ENCODE measurements at regions of chr9 and their contacts with region 1.

Region 1: GRCh38 chr9:101530077-101530711 is 3.5 kb upstream of the RNF20 start:
- DNase-seq: peak; percentile 51 to 76 (median 64)
- H3K4me3 ChIP-seq: no peak overlapping the region
- H3K27ac ChIP-seq: no peak overlapping the region
- H3K4me1 ChIP-seq: no peaks in the 10 kb centered on the region
- H3K27me3 ChIP-seq: no peaks in the 10 kb centered on the region
- CTCF ChIP-seq: peak; percentile 62 to 79 (median 67)
- EP300 ChIP-seq: no peak
- POLR2A ChIP-seq: no peak

Region 2: DNA sequence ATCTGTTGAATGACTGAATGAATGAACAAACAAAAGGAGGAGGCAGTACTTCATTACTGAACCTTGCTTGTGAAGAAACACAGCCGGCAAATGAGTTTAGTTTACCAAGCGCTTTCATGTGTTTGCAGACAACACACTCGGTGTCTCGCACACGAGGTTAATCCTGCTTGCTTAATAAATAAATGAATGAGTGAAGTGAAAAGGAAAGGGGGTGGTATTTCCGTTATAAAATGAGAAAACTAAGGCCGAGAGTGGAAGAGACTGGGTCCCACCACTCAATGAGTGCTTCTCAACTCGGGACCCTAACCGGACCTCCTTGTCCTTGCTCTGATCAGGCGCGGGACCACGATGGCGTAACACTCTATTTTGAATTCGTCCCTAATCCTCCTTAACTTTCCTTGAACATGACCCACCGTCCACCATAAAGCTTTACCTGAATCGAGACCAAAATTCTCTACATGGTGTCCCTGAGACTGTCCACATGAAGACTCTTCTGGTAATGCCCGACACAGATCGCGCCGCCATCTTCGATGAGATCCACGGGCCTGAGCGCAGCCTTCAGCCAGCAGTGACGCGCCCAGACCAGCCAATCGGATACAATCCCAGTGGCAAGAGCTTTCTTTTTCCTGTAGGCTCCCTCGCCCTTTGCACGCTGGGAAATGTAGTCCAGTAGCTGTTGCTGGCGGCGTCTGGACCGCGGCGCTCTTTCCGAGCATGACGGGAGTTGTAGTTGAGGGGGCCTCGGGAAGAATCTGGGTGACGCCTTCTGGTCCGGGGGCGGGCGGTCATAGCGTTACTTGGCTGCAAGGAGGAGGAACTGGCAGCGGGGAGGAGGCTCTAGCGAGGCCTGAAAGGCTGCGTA is 131.9 kb before region 1 on chr9 and contains the starts of genes MRPL50 and ZNF189:
- intact Hi-C with region 1: loop called in 1 of 4 experiments (anchors 5 kb)
- DNase-seq: peak; percentile 97 to 99 (median 97)
- H3K4me3 ChIP-seq: peak within 1 kb of the TSS; percentile 84
- H3K27ac ChIP-seq: peak within 1 kb of the TSS; percentile 70 to 81
- H3K4me1 ChIP-seq: peaks cover 2% of the 10 kb centered on the region
- H3K27me3 ChIP-seq: no peaks in the 10 kb centered on the region
- CTCF ChIP-seq: no peak
- EP300 ChIP-seq: no peak
- POLR2A ChIP-seq: peak; percentile 93
- total RNA-seq, gene MRPL50: 13.1 to 16.9 (median 15.2) TPM
- total RNA-seq, gene ZNF189: 14.9 to 30.5 (median 25.1) TPM

Region 3: GRCh38 chr9:101458955-101459631 is 71.1 kb before region 1 on chr9:
- intact Hi-C with region 1: loop called (anchors 1 to 5 kb)
- DNase-seq: peak in 1 of 5 donors; percentile 20
- H3K4me3 ChIP-seq: no peak overlapping the region
- H3K27ac ChIP-seq: no peak overlapping the region
- H3K4me1 ChIP-seq: no peaks in the 10 kb centered on the region
- H3K27me3 ChIP-seq: no peaks in the 10 kb centered on the region
- CTCF ChIP-seq: peak; percentile 36 to 61 (median 48)
- EP300 ChIP-seq: no peak
- POLR2A ChIP-seq: no peak